Activated CD4-positive, alpha-beta T cell treated with anti-CD3 and anti-CD28 coated beads for 36 hours (primary cell): ENCODE measurements at regions of chr1 and their contacts with region 1.

Region 1: GRCh38 chr1:152189657-152190442 is 30.8 kb upstream of the RPTN start:
- DNase-seq: peak; percentile 83
- ATAC-seq: peak; percentile 76
- H3K4me3 Mint-ChIP-seq: peak overlapping the region; percentile 65
- H3K27ac Mint-ChIP-seq: peak overlapping the region; percentile 48
- H3K4me1 Mint-ChIP-seq: peaks cover 8% of the 10 kb centered on the region
- H3K27me3 Mint-ChIP-seq: peaks cover 11% of the 10 kb centered on the region

Region 2: DNA sequence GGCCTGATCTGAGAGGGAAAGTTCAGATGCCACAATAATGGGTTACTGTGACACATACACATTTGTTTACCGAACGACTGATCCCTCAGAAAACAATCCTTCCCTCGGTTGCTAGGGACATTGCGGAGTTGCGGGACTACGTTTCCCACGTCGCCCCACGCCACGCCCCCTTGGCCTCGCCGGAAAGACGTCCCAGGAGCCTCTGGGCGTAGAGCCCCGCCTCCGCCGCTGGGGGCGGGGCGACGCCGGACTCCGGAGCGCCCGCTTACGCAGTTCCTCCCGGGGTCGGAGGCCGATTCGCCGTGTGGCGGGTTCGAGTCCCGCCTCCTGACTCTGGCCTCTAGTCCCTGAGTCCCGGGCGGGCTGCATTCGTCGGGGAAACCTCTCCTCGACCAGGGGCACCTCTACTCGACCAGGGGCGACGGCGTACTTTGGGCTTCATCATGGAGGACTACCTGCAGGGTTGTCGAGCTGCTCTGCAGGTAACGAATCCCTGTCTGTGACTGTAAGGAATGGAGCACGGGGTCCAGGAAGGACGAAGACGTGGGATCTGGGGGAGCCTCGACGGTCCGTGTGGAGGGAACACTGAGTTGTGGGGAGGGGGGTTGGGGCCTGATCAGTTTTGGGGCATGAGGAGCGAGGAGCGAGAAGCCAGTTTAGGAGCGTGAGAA is 1181.5 kb before region 1 on chr1 and contains the start of gene PRUNE1:
- CTCF ChIA-PET with region 1: no interaction called
- POLR2A ChIA-PET with region 1: no interaction called
- intact Hi-C with region 1: no loop called
- DNase-seq: peak; percentile 99
- ATAC-seq: peak; percentile 84
- H3K4me3 Mint-ChIP-seq: peak within 1 kb of the TSS; percentile 90
- H3K27ac Mint-ChIP-seq: peak within 1 kb of the TSS; percentile 96
- H3K4me1 Mint-ChIP-seq: peaks cover 63% of the 10 kb centered on the region
- H3K27me3 Mint-ChIP-seq: no peaks in the 10 kb centered on the region
- total RNA-seq, gene PRUNE1: 13.6 to 18.6 TPM

Region 3: DNA sequence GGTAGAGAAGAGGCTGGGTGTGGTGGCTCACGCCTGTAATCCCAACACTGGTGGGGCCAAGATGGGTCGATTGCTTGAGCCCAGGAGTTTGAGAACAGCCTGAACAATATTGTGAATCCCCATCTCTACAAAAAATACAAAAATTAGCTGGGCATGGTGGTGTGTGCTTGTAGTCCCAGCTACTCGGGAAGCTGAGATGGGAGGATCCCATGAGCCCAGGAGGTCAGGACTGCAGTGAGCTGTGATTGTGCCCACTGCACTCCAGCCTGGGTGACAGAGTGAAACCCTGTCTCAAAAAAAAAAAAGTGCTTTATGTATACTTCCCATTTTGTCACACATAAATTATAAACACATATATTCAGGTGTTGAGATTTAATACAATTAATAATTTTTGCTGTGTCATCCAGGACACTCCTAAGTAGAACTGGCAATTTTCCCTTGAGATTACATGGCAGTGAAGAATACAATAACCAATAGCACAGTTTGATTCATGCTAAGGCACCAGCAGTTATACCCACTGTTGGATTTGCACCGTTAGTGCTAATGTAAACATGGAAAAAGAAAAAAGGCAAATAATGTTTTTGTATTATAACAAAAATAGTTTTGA is 1103.8 kb before region 1 on chr1:
- CTCF ChIA-PET with region 1: no interaction called
- POLR2A ChIA-PET with region 1: no interaction called
- intact Hi-C with region 1: no loop called
- DNase-seq: no peak
- ATAC-seq: no peak
- H3K4me3 Mint-ChIP-seq: no peak overlapping the region
- H3K27ac Mint-ChIP-seq: no peak overlapping the region
- H3K4me1 Mint-ChIP-seq: no peaks in the 10 kb centered on the region
- H3K27me3 Mint-ChIP-seq: no peaks in the 10 kb centered on the region

Region 4: DNA sequence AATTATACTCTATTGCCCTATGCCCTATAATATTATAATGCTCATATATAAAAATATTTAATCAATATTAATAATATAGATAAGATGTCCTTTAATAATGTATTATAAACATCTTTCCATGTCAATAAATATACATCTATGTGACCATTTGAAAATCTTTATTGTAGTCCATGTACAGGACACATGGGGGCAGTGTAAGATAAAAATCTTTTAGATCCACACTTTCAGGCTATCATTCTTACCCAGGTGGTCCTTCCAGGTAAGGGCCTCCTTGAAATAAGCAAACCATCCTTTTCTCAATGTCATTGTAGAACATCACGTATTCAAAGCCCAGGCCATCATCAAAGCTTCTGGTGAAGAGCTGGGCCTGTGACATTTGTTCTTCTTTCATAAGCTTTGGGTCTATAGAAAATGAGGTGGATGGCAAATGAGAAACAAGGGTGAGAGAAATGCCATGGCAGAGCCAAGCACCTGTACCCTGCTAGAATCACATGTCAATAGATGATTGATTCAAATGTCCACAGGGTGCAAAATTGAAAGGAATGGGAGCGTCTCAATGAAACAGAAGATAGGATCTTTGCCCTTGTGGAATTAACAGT is 300.8 kb before region 1 on chr1:
- CTCF ChIA-PET with region 1: no interaction called
- POLR2A ChIA-PET with region 1: no interaction called
- intact Hi-C with region 1: loop called in 1 of 2 experiments (anchors 5 kb)
- DNase-seq: no peak
- ATAC-seq: peak; percentile 57
- H3K4me3 Mint-ChIP-seq: no peak overlapping the region
- H3K27ac Mint-ChIP-seq: no peak overlapping the region
- H3K4me1 Mint-ChIP-seq: peaks cover 25% of the 10 kb centered on the region
- H3K27me3 Mint-ChIP-seq: no peaks in the 10 kb centered on the region

Region 5: DNA sequence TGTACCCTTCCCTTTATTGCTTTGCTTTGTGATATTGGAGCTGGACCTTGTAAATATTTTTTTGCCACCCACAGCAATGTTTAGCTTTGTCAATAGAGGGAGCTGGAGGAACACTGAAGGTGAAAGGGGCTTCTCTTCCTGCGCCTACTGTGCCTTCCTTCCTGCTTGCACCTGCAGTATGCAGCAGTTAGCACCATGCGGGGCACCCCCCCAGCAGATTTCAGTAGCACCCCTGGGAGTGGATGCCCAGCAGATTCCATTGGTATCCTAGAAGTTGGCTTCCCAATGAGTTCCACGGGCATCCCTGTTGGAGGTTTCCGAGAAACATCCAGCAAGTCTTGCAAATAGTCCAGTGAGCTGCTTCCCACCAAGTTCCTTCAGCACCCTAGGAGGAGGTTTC is 221.8 kb before region 1 on chr1:
- CTCF ChIA-PET with region 1: interaction called, 5 read pairs
- POLR2A ChIA-PET with region 1: no interaction called
- intact Hi-C with region 1: loop called in 1 of 2 experiments (anchors 10 kb)
- DNase-seq: peak; percentile 63
- ATAC-seq: peak; percentile 78
- H3K4me3 Mint-ChIP-seq: no peak overlapping the region
- H3K27ac Mint-ChIP-seq: no peak overlapping the region
- H3K4me1 Mint-ChIP-seq: peaks cover 18% of the 10 kb centered on the region
- H3K27me3 Mint-ChIP-seq: no peaks in the 10 kb centered on the region

Region 6: GRCh38 chr1:152110860-152111514 is 78.9 kb before region 1 on chr1:
- CTCF ChIA-PET with region 1: interaction called, 26 read pairs
- POLR2A ChIA-PET with region 1: no interaction called
- intact Hi-C with region 1: loop called (anchors 2 kb)
- DNase-seq: peak; percentile 65
- ATAC-seq: peak; percentile 63
- H3K4me3 Mint-ChIP-seq: no peak overlapping the region
- H3K27ac Mint-ChIP-seq: no peak overlapping the region
- H3K4me1 Mint-ChIP-seq: no peaks in the 10 kb centered on the region
- H3K27me3 Mint-ChIP-seq: peaks cover 13% of the 10 kb centered on the region

Region 7: GRCh38 chr1:152175544-152175943 is 14.3 kb before region 1 on chr1:
- CTCF ChIA-PET with region 1: interaction called, 71 read pairs
- POLR2A ChIA-PET with region 1: no interaction called
- intact Hi-C with region 1: no loop called
- DNase-seq: no peak
- ATAC-seq: no peak
- H3K4me3 Mint-ChIP-seq: no peak overlapping the region
- H3K27ac Mint-ChIP-seq: no peak overlapping the region
- H3K4me1 Mint-ChIP-seq: no peaks in the 10 kb centered on the region
- H3K27me3 Mint-ChIP-seq: peaks cover 4% of the 10 kb centered on the region

Region 8: DNA sequence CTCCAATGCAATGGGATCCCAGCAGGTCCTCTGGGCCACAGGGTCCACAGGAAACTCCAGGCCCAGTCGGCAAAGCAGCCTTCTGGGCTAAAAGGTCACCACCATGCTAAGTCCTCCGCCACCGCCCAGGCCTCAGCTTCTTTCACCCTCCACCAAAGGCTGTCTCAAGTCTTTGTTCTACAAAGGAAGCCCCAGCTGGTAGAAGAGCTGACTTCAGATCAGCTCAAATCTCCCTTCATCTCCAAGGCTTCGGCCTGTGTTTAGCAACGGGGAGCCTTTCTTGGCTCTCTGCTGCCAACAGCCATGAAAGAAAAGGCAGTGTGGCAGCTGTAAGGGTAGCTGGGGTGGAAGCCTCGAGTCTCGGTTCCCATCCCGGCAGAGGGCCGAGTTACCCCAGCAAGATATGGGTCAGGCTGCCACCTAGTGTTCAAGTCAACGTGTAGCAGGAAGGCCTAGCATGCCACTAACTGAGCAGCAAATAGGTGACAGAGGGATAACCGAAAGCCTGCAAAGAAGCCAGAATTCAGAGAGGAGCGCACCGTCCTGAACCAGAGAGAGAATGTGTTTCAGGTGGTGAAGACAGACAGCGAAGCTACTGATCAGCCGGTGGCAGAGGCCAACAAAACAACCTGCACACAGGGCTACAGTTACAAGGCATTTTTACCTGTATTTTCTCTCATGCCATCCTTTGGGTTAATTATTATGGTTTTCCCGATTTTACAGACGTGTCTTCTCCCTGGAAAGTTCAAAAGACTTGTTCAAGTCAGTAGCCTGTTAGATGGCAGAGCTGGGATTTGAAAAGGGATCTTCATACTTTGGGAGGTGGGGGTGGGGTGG is 251.0 kb after region 1 on chr1:
- CTCF ChIA-PET with region 1: interaction called, 18 read pairs
- POLR2A ChIA-PET with region 1: no interaction called
- intact Hi-C with region 1: loop called (anchors 1 to 2 kb)
- DNase-seq: peak; percentile 81
- ATAC-seq: peak; percentile 99
- H3K4me3 Mint-ChIP-seq: no peak overlapping the region
- H3K27ac Mint-ChIP-seq: no peak overlapping the region
- H3K4me1 Mint-ChIP-seq: no peaks in the 10 kb centered on the region
- H3K27me3 Mint-ChIP-seq: peaks cover 19% of the 10 kb centered on the region

Region 9: GRCh38 chr1:152533327-152533938 is 343.6 kb after region 1 on chr1:
- CTCF ChIA-PET with region 1: no interaction called
- POLR2A ChIA-PET with region 1: no interaction called
- intact Hi-C with region 1: loop called in 1 of 2 experiments (anchors 2 kb)
- DNase-seq: peak; percentile 68
- ATAC-seq: no peak
- H3K4me3 Mint-ChIP-seq: no peak overlapping the region
- H3K27ac Mint-ChIP-seq: no peak overlapping the region
- H3K4me1 Mint-ChIP-seq: no peaks in the 10 kb centered on the region
- H3K27me3 Mint-ChIP-seq: peaks cover 43% of the 10 kb centered on the region